ENCODE measurements at regions of chr2 and their contacts with region 1.

Region 1: DNA sequence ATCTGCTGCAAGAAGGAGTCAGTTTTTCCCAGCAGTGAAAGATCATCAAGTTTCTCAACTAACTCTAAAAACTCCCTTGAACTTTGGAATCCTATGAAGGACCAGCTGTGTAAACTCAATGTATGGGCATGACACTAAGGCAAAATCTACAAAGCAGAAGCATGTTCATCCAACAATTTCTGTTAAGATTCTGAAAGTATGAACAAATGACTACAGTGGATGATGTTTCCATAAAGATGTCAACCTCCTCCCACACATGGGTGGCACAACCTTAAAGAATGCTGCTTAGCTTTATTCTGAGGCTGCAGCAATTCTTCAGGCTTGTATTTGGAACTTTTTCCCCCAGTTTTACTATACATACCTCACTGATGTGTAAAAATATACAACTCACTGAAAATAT is 47.2 kb downstream of the WDR33 start:
- DNase-seq: no peak
- H3K4me3 ChIP-seq: no peak overlapping the region
- H3K27me3 ChIP-seq: no peaks in the 10 kb centered on the region
- CTCF ChIP-seq: no peak

Region 2: GRCh38 chr2:127796389-127796788 is 32.6 kb after region 1 on chr2:
- CTCF ChIA-PET with region 1: interaction called, 4 read pairs
- POLR2A ChIA-PET with region 1: interaction called, 11 read pairs
- DNase-seq: no peak
- H3K4me3 ChIP-seq: no peak overlapping the region
- H3K27me3 ChIP-seq: no peaks in the 10 kb centered on the region
- CTCF ChIP-seq: no peak

Region 3: GRCh38 chr2:127884436-127885345 is 120.9 kb after region 1 on chr2:
- CTCF ChIA-PET with region 1: no interaction called
- POLR2A ChIA-PET with region 1: interaction called, 30 read pairs
- DNase-seq: peak; percentile 46
- H3K4me3 ChIP-seq: peak overlapping the region; percentile 46
- H3K27me3 ChIP-seq: no peaks in the 10 kb centered on the region
- CTCF ChIP-seq: no peak

Region 4: DNA sequence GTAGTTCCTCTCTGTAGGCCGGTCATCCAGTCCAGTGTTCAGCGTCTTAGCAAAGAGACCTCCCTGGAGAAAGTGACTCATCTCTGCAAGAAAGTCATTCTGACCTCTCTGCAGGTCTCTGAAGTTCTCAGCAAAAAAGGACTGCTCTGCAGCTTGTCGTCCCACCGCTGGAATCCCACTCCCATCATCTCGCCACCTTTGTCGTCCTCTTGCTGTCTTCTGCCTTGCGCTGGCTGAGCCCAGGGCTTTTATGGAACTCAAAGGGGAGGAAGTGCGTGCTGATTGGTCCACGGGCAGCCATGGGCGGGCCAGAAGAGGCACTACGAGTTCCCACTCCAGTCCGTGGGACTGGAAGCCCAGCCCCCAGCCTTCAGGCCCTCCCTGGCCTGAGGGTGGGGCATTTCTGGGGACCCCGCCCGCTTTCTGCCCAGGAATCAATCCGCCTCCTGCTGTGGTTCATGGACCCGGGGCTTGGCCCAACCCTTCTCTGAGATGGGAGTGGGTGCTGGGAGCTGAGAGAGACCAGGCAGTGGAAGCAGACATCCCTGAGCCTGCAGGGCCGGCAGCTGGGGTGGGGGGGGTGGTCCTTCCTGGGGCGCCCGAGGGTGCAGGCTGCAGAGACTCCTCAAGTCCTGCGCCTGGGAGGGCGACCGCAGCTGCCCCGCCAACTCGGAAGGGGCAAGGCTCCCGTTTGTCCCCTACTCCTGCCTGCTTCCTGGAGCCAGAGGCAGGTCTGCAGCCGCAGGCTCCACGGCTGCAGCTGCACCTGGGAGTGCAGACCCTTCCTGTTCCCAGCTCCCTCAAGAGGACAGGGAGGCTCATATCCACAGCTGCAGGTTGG is 1555.0 kb after region 1 on chr2:
- CTCF ChIA-PET with region 1: no interaction called
- POLR2A ChIA-PET with region 1: no interaction called
- DNase-seq: no peak
- H3K4me3 ChIP-seq: no peak overlapping the region
- H3K27me3 ChIP-seq: no peaks in the 10 kb centered on the region
- CTCF ChIP-seq: no peak

Measured in BJ (cell line).